MCF 10A (cell line): ENCODE measurements at regions of chr1 and their contacts with region 1.

Region 1: GRCh38 chr1:62159940-62160348 is 34.7 kb upstream of the L1TD1 start:
- DNase-seq: no peak
- H3K4me3 Mint-ChIP-seq: no peak overlapping the region
- H3K27ac Mint-ChIP-seq: no peak overlapping the region
- H3K4me1 Mint-ChIP-seq: no peaks in the 10 kb centered on the region
- H3K27me3 Mint-ChIP-seq: no peaks in the 10 kb centered on the region
- CTCF ChIP-seq: no peak

Region 2: DNA sequence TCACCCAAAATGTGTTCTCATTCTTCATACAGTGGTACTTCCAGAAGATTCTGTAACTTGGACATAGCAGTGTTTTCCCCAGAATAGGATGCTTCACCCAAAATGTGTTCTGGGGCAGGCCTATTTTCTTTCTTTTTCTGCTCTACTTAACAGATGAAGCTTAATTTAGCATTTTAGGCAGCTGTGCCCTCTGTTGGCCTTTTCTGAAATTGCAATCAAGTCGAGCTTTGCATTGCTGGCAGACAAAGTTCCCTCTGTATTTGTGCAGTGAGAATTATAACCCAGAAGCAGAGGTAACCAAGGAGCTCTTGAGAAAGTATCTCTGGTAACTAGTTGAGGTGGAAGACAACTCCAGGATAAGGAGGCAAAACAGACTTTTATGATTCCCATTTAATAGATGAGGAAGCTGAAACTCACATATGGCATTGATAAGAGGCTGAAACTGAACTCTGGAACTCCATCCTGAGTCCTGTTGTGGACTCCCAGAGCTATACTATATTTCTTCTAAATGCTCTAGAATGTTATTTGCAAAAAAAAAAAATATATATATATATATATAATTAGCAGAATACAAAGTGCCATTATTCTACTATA is 15.6 kb before region 1 on chr1:
- CTCF ChIA-PET with region 1: interaction called, 10 read pairs
- POLR2A ChIA-PET with region 1: no interaction called
- intact Hi-C with region 1: no loop called
- DNase-seq: peak; percentile 60
- H3K4me3 Mint-ChIP-seq: no peak overlapping the region
- H3K27ac Mint-ChIP-seq: no peak overlapping the region
- H3K4me1 Mint-ChIP-seq: peaks cover 6% of the 10 kb centered on the region
- H3K27me3 Mint-ChIP-seq: no peaks in the 10 kb centered on the region
- CTCF ChIP-seq: peak; percentile 62